ENCODE measurements at regions of chr7 and their contacts with region 1.

Region 1: GRCh38 chr7:8134089-8134733 is 127.8 kb downstream of the ICA1 start:
- DNase-seq: peak; percentile 30
- H3K4me3 Mint-ChIP-seq: peak overlapping the region; percentile 1
- H3K27ac Mint-ChIP-seq: peak overlapping the region; percentile 87
- H3K4me1 Mint-ChIP-seq: peaks cover 61% of the 10 kb centered on the region
- H3K27me3 Mint-ChIP-seq: no peaks in the 10 kb centered on the region

Region 2: DNA sequence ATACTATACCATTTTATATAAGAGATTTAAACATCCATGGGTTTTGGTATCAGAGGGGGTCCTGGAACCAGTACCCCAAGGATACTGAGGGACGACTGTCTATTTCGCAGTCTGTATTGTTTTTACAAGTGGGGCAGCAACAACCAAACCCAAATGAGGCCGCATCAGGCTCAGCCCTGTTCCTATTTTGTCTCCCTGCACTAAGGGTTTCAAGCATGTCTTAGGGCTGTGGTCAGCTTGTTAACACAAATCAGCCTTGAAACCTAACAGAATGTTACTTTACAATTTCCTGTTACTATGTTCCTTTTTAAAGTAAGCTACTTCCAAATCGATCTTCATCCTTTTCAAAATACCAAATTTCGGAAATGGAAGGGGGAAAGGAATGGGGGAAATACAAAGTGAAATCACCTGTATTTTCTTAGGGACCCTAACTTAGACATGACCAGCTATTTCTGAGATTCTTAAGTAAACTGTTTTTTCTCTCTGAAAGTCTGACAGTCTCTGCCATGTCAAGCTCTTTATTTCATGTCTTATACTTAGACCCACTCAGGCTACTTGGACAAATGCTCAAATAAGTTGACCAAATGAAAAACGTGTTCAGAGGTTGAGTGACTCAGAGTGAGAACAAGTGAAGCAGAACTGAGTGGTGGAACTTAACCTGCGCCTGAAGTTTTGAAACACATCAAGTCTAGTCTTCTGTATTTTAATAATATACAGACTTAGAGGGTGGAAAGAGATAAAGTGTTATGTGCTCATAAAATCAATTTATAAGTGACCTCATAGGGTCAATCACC is 876.1 kb before region 1 on chr7:
- intact Hi-C with region 1: loop called (anchors 5 kb)
- DNase-seq: no peak
- H3K4me3 Mint-ChIP-seq: peak overlapping the region; percentile 70
- H3K27ac Mint-ChIP-seq: peak overlapping the region; percentile 86
- H3K4me1 Mint-ChIP-seq: peaks cover 48% of the 10 kb centered on the region
- H3K27me3 Mint-ChIP-seq: no peaks in the 10 kb centered on the region

Region 3: DNA sequence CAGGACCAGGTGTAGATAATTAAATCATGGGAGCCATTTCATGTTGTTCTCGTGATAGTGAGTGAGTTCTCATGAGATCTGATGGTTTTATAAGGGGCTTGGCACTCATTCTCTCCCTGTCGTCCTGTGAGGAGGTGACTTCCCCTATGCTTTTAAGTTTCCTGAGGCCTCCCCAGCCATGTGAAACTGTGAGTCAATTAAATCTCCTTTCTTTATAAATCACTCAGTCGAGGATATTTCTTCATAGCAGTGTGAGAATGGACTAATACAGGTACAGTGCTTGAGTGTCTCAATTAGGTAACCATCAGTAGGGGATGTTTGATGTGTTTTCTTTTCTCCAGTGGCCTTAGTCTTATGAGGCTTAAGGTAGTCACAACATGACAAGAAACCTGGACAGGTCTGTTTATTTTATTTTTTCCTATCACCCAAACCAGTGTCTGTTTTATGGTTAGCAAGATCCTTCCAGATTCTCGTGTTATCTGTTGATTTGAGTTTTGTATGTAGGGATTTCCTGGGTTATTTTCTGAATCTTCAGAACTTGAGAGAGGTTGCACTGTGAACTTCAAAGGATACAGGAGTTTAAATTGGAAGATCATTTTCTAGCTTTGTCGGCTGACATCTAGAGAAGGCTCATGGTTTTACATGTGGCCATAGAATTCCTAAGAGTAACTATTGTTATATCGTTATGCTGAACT is 461.5 kb before region 1 on chr7:
- intact Hi-C with region 1: loop called (anchors 5 kb)
- DNase-seq: no peak
- H3K4me3 Mint-ChIP-seq: peak overlapping the region; percentile 11
- H3K27ac Mint-ChIP-seq: peak overlapping the region; percentile 88
- H3K4me1 Mint-ChIP-seq: peaks cover 31% of the 10 kb centered on the region
- H3K27me3 Mint-ChIP-seq: no peaks in the 10 kb centered on the region

Region 4: GRCh38 chr7:7772397-7772821 is 361.8 kb before region 1 on chr7:
- intact Hi-C with region 1: loop called (anchors 2 kb)
- DNase-seq: no peak
- H3K4me3 Mint-ChIP-seq: peak overlapping the region; percentile 40
- H3K27ac Mint-ChIP-seq: no peak overlapping the region
- H3K4me1 Mint-ChIP-seq: peaks cover 19% of the 10 kb centered on the region
- H3K27me3 Mint-ChIP-seq: no peaks in the 10 kb centered on the region

Region 5: DNA sequence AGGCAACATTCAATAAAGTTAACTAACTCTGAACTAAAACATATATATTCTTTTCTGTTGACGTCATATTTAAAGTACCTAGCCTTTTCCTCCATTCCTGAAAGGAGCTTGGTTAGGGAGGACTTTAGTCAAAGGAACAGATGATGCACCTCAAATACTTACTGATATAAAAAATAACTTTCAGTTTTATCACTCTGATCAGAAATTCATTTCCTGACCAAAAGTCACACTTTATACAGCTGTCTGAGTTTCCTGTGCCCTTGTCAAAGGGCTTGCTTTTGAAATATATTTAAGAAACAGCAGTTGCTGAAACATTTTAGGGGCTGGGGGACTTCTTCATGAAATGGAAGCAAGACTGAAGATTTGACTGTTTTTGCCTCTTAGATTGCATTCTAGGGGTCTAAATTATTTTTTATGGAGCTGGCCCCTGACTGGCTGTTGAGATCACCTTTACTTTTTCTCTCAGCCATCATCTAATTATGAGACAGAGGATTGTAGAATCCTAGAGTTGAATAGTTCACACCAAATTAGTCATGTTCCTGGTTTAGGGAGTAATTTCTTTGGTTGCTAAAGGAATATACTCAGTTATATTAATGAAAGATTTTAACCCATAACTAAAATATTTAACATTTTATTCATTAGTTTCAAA is 119.0 kb before region 1 on chr7:
- intact Hi-C with region 1: loop called (anchors 1 kb)
- DNase-seq: no peak
- H3K4me3 Mint-ChIP-seq: no peak overlapping the region
- H3K27ac Mint-ChIP-seq: peak overlapping the region; percentile 28
- H3K4me1 Mint-ChIP-seq: peaks cover 17% of the 10 kb centered on the region
- H3K27me3 Mint-ChIP-seq: no peaks in the 10 kb centered on the region

Region 6: DNA sequence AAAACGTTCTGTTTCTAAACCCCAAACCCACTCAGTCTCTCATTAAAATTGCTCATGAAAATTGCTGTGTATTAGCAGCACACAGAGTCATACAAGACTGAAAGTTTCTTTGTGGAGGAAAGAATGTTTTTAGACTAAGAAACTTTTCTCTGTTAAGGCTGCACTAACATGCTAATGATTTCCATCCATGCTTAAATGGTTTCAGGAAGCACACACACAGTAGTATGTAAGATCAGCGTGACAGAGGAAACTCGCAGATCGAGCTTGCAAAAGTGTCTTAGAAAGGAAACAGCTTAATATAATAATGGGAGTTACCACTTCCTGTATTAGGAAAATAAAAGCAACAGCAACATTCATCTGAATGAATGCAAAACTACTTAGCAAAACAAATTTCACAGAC is 15.0 kb after region 1 on chr7:
- intact Hi-C with region 1: no loop called
- DNase-seq: no peak
- H3K4me3 Mint-ChIP-seq: no peak overlapping the region
- H3K27ac Mint-ChIP-seq: no peak overlapping the region
- H3K4me1 Mint-ChIP-seq: peaks cover 20% of the 10 kb centered on the region
- H3K27me3 Mint-ChIP-seq: peaks cover 3% of the 10 kb centered on the region

Region 7: DNA sequence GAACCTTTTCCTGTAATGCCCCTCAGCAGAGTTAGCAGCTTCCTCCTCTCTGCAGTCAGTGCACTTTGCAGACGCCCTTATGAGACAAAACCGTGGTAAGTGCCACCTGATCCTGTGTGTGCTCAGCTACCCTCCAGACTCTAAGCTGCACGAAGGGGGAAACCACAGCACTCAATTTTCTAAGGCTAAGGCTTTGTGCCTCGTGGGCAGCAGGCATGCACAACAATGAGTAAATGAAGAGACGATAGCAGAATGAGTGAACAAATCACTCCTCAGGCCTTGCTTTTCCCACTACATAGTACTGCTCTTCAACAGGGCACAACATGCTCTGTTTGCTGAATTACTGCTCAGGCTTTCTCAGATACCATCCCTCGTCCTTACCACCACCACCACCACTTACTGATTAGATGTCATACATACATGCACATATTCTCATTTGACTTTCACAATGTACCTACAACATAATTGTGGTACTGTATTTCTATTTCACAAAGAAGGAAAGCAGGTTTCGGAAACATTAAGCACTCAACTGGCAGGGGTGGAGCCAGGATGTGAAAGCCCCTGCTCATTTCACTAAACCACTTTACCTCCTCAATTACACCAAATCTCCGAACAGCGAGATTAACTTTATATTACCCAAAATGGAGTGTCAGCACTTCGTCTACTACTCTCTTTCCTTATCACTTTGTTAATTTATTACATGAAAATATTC is 42.3 kb after region 1 on chr7:
- intact Hi-C with region 1: loop called (anchors 1 kb)
- DNase-seq: peak; percentile 62
- H3K4me3 Mint-ChIP-seq: peak overlapping the region; percentile 62
- H3K27ac Mint-ChIP-seq: peak overlapping the region; percentile 95
- H3K4me1 Mint-ChIP-seq: peaks cover 49% of the 10 kb centered on the region
- H3K27me3 Mint-ChIP-seq: no peaks in the 10 kb centered on the region